ENCODE measurements at regions of chr13 and their contacts with region 1.

Region 1: DNA sequence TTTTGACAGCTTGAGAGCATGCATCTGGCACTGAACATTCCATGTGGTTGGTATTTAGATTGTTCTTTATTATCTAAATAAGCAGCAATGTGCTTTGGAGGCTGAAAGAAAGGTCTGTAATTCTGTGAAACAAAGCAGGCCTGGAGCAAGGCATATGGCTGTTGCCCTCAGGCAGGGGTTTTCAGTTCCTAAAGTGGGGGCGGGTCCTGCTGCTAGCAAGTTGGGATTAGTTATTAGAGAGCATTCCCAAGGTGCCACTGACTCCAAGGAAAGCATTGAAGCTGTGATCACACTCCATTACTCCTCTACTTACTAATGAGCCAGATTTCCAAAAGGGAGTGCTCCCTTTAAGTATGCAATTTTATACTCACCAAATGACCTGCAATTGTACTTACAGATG is 432.2 kb downstream of the OLFM4 start:
- DNase-seq: no peak
- ATAC-seq: no peak
- H3K4me3 ChIP-seq: no peak overlapping the region
- H3K27ac ChIP-seq: no peak overlapping the region
- H3K4me1 ChIP-seq: no peaks in the 10 kb centered on the region
- H3K27me3 ChIP-seq: no peaks in the 10 kb centered on the region
- CTCF ChIP-seq: no peak

Region 2: DNA sequence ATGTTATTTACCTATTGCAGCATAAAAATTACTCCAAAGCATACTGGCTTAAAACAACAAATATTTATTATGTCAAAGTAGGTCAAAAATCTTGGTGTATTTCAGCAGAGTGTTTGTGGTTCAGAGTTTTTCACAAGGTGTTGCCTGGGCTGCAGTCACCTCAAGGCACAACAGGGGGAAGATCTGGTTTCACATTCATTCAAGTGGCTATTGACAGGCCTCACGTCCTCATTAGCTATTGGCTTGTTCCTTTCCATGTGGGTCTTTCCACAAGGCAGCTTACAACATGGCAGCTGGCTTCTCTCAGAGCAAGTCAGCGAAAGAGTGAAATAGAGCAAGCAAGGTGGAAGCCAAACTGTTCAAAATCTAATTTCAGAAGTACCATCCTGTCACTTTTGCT is 170.7 kb after region 1 on chr13:
- CTCF ChIA-PET with region 1: no interaction called
- POLR2A ChIA-PET with region 1: no interaction called
- in situ Hi-C with region 1: no loop called
- intact Hi-C with region 1: no loop called
- DNase-seq: no peak
- ATAC-seq: no peak
- H3K4me3 ChIP-seq: no peak overlapping the region
- H3K27ac ChIP-seq: no peak overlapping the region
- H3K4me1 ChIP-seq: no peaks in the 10 kb centered on the region
- H3K27me3 ChIP-seq: no peaks in the 10 kb centered on the region
- CTCF ChIP-seq: no peak

Region 3: GRCh38 chr13:53642306-53642705 is 181.5 kb after region 1 on chr13:
- CTCF ChIA-PET with region 1: no interaction called
- POLR2A ChIA-PET with region 1: no interaction called
- in situ Hi-C with region 1: no loop called
- intact Hi-C with region 1: loop called (anchors 5 kb)
- DNase-seq: no peak
- ATAC-seq: no peak
- H3K4me3 ChIP-seq: no peak overlapping the region
- H3K27ac ChIP-seq: no peak overlapping the region
- H3K4me1 ChIP-seq: no peaks in the 10 kb centered on the region
- H3K27me3 ChIP-seq: no peaks in the 10 kb centered on the region
- CTCF ChIP-seq: no peak

Measured in Panc1 (cell line).